Lower leg skin (tissue), 4 donors: ENCODE measurements at regions of chr2 and their contacts with region 1.

Region 1: GRCh38 chr2:53744395-53745065 is 23.1 kb upstream of the CHAC2 start:
- DNase-seq: peak in 1 of 2 donors; percentile 39
- H3K4me3 ChIP-seq: no peak overlapping the region
- CTCF ChIP-seq: no peak
- POLR2A ChIP-seq: no peak

Region 2: GRCh38 chr2:53786705-53787612 is 42.4 kb after region 1 on chr2 and contains the starts of genes ASB3 and ERLEC1:
- intact Hi-C with region 1: no loop called
- DNase-seq: peak; percentile 83 to 97
- H3K4me3 ChIP-seq: peak within 1 kb of the TSS; percentile 85
- CTCF ChIP-seq: no peak
- POLR2A ChIP-seq: no peak
- total RNA-seq, gene ASB3: 11.0 to 21.1 (median 17.6) TPM
- total RNA-seq, gene ERLEC1: 15.6 to 60.1 (median 30.7) TPM

Region 3: GRCh38 chr2:54409752-54410151 is 665.2 kb after region 1 on chr2:
- intact Hi-C with region 1: loop called (anchors 5 kb)
- DNase-seq: no peak
- H3K4me3 ChIP-seq: no peak overlapping the region
- CTCF ChIP-seq: no peak
- POLR2A ChIP-seq: no peak